GM18951 (cell line): ENCODE measurements at regions of chr17 and their contacts with region 1.

Region 1: DNA sequence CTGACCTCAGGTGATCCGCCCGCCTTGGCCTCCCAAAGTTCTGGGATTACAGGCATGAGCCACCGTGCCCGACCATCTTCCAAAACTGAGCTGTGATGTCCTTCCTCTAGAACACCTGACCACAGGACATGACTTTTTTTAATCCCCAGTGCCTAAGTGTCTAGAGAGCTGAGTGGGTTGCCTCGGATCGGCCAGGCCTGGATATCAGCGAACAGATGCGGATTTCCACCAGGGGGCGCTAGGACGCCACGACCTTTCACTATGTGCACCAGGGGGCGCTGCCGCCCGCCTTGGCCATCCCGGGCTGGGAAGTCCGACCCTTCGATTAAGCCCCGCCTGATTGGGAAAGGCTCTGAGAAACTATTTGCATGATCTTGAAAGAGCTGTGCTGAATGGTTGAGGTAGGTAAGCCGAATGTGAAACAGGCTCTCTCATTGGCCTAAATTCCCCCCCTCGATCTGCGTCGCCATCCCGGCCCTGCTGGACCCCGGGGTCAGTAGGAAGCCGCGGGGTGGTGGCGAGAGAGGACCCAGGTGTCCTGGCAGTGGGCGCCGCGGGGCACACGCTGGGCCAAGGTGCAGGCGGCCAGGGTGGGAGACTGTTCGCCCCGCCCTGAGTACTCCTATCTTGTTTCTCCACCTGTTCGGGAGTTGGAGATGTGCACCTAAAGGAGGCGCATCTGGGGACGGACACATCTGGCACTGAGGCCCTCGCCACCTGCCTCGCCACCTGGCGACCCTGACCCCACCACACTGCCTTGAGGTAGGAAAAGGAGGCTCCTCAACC is at the start of gene ACBD4:
- POLR2A ChIP-seq: peak; percentile 80

Region 2: DNA sequence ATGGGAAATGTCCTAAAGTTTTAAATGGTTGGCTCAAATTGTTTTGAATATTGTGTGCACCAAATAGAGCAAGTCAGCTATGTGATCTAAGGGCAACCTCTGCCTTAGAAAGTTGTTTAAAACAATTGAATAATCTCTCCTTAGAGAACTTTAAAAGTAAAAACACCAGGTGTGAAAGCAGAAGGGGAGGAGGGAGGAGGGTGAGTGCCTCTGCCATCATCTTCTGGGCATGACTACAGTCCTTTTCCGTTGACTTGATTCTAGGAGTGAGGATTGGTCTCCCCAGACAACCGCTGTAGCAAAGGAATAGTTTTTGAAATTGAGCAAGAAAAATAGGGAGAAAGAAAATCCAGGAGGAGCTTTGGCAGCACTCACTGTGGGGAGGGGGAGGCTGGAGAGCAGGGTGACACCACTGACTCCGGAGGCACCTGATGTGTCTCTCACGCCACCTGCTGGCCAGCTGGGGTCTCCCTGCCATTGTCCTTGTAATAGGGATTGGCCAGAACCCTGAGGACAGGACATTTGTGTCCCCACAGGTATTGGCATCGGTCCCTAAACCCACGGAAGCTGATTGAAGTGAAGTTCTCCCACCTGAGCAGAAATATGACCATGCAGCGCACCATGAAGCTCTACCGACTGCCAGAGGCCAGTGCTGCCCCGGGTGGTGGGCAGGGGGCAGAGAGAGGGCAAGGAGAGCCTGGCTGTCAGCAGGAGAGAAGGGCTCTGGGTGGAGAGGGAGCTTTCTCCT is 36.3 kb before region 1 on chr17:
- in situ Hi-C with region 1: no loop called
- POLR2A ChIP-seq: no peak

Region 3: GRCh38 chr17:45197555-45198334 is 62.4 kb after region 1 on chr17:
- in situ Hi-C with region 1: loop called (anchors 5 kb)
- POLR2A ChIP-seq: no peak